Ovary (tissue), 10 donors: ENCODE measurements at regions of chr2 and their contacts with region 1.

Region 1: DNA sequence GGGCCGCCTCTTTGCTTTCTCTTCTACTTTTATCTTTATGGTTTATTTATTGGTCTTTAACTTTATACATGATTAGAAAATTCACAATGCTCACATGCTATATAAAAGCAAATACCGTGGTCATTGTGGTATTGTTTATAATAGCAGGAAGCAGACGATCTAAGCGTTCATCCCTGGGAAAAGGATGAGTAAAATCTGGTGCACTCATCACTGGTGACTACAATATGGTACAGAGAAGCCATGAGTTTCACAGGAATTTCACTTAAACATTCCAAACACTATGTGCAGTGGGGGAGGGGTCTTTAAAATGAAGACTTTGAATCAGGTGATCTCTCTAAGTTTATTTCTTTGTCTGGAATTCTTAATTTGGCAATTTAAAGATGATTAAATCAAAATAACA is 97.9 kb downstream of the SCN3A start:
- DNase-seq: no peak
- H3K4me3 ChIP-seq: no peak overlapping the region
- H3K27ac ChIP-seq: no peak overlapping the region
- H3K4me1 ChIP-seq: no peaks in the 10 kb centered on the region
- H3K27me3 ChIP-seq: no peaks in the 10 kb centered on the region
- CTCF ChIP-seq: no peak
- EP300 ChIP-seq: no peak
- POLR2A ChIP-seq: no peak

Region 2: GRCh38 chr2:165079432-165079831 is 26.5 kb before region 1 on chr2:
- intact Hi-C with region 1: loop called in 1 of 4 experiments (anchors 1 kb)
- DNase-seq: no peak
- H3K4me3 ChIP-seq: no peak overlapping the region
- H3K27ac ChIP-seq: no peak overlapping the region
- H3K4me1 ChIP-seq: no peaks in the 10 kb centered on the region
- H3K27me3 ChIP-seq: no peaks in the 10 kb centered on the region
- CTCF ChIP-seq: no peak
- EP300 ChIP-seq: no peak
- POLR2A ChIP-seq: no peak

Region 3: DNA sequence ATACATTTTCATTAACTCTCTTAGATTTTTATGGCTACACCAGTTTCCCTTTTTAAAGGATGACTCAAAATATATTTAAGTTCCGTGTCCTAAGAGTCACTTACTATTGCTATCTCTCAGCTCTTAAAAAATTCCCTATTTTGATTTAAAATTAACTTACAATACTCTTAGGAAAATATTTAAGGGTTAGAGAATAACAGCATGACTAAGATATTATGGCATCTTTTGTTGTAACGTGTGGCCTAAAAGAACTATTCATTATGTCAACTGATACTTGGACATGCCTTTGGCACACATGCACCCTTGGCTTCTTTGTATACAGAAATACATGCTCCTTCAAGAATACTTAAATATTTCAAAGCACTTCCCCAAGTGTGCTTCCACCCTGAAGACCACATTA is 55.6 kb after region 1 on chr2:
- intact Hi-C with region 1: no loop called
- DNase-seq: no peak
- H3K4me3 ChIP-seq: no peak overlapping the region
- H3K27ac ChIP-seq: no peak overlapping the region
- H3K4me1 ChIP-seq: no peaks in the 10 kb centered on the region
- H3K27me3 ChIP-seq: no peaks in the 10 kb centered on the region
- CTCF ChIP-seq: no peak
- EP300 ChIP-seq: no peak
- POLR2A ChIP-seq: no peak